Activated B cell treated with CpG ODN at 0.5 μM for 24 hours (primary cell): ENCODE measurements at regions of chr19 and their contacts with region 1.

Region 1: GRCh38 chr19:38769635-38770211 is 3.6 kb downstream of the LGALS7 start:
- DNase-seq: peak; percentile 94
- ATAC-seq: peak; percentile 89
- H3K4me3 Mint-ChIP-seq: peak overlapping the region; percentile 68
- H3K27ac Mint-ChIP-seq: peak overlapping the region; percentile 78
- H3K4me1 Mint-ChIP-seq: peaks cover 11% of the 10 kb centered on the region
- H3K27me3 Mint-ChIP-seq: no peaks in the 10 kb centered on the region
- CTCF ChIP-seq: peak; percentile 59

Region 2: GRCh38 chr19:38736413-38737280 is 33.1 kb before region 1 on chr19:
- CTCF ChIA-PET with region 1: no interaction called
- POLR2A ChIA-PET with region 1: interaction called, 28 read pairs
- intact Hi-C with region 1: loop called (anchors 2 kb)
- DNase-seq: peak; percentile 64
- ATAC-seq: peak; percentile 60
- H3K4me3 Mint-ChIP-seq: peak overlapping the region; percentile 71
- H3K27ac Mint-ChIP-seq: peak overlapping the region; percentile 12
- H3K4me1 Mint-ChIP-seq: peaks cover 38% of the 10 kb centered on the region
- H3K27me3 Mint-ChIP-seq: no peaks in the 10 kb centered on the region
- CTCF ChIP-seq: no peak

Region 3: DNA sequence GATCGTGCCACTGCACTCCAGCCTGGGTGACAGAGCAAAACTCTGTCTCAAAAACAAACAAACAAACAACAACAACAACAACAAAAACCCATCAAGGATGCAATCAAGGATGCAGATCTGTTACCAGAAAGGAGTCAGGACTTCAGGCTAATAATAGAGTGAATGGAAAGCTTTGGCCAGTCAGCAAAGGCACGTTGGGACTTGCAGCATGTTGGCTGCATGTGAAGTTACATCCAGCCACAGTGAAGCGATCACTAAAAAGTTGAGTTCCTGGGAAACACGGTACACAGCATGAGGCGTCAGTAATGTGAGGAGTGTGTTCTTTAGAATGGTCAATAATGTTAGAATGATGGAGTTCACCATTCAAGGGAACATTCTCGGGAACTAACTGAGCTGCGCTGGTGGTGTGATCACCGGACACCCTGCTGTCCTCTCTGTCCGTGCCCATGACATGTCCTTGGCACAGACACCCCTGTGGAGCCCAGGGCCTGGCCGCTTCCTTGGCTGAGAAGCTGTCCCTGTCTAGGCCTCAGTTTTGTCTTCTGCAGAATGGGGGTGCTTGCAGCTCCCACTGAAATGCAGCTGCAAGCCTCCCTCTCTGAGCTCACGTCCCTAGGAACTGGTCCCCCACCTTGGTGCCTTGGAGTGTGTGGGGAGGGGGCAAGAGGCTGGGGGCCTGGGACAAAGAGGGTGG is 17.0 kb after region 1 on chr19:
- CTCF ChIA-PET with region 1: interaction called, 3 read pairs
- POLR2A ChIA-PET with region 1: interaction called, 14 read pairs
- intact Hi-C with region 1: no loop called
- DNase-seq: no peak
- ATAC-seq: no peak
- H3K4me3 Mint-ChIP-seq: no peak overlapping the region
- H3K27ac Mint-ChIP-seq: no peak overlapping the region
- H3K4me1 Mint-ChIP-seq: no peaks in the 10 kb centered on the region
- H3K27me3 Mint-ChIP-seq: peaks cover under 1% of the 10 kb centered on the region
- CTCF ChIP-seq: no peak

Region 4: DNA sequence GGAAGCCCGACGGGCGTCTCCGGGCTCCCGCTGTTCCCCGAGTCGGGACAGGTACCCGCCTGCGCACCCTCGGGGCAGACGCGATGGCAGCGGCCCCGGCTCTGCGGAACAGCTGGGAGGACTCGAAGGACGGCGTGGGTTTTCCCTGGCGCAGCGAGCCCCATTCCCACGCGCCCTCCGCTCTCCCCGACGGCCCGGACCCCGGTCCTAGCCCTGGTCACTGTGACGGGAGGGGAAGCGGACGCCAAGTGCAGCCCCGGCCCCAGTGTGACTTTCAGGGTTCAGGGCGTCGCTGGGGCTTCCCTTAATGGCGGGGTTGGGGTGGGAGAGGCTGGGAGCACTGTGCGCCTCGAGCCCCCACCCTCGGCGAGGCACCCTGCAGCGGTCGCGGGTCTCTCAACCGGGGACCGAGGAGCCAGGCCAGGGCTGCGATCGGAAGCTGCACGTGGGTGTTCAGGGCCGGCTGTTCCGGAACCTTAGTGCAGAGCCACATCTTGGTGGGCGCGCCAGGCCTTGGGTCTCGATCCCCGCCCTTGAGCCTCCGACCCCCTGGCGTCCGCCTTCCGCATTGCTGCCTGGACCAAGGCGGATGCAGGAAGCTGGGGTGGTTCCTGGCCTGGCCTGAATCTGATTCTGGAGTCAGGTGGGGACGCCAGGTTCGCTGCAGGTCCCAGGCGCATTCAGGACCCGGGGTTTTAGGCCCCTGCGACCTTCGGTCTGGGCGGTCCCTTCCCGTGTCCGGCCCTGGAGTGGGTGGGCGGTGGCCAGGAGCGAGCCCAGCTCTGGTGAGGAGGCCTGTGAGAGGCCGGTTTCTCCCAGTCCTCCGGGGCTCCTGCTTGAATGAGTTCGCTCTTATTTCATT is 22.8 kb after region 1 on chr19:
- CTCF ChIA-PET with region 1: interaction called, 5 read pairs
- POLR2A ChIA-PET with region 1: interaction called, 14 read pairs
- intact Hi-C with region 1: no loop called
- DNase-seq: peak; percentile 63
- ATAC-seq: peak; percentile 76
- H3K4me3 Mint-ChIP-seq: peak overlapping the region; percentile 71
- H3K27ac Mint-ChIP-seq: no peak overlapping the region
- H3K4me1 Mint-ChIP-seq: peaks cover 6% of the 10 kb centered on the region
- H3K27me3 Mint-ChIP-seq: no peaks in the 10 kb centered on the region
- CTCF ChIP-seq: no peak

Region 5: DNA sequence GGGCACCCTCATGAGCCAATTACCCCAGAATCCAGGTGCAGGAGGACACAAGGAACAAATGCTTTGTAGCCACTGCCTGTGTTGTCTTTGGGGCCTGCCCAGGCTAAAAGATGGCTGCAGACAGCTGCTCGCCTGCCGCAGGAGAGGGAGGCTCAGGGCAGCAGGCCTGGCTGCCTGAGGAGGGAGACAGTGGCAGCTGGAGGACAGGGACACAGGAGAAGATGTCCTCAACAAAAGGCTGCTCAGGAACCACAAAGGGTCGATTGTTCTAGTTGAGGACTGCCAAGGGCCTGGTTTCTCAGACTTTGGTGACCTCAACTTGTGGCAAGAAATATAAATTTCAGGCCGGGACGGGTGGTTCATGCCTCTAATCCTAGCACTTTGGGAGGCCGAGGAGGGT is 122.0 kb after region 1 on chr19:
- CTCF ChIA-PET with region 1: interaction called, 11 read pairs
- POLR2A ChIA-PET with region 1: interaction called, 8 read pairs
- intact Hi-C with region 1: loop called (anchors 2 kb)
- DNase-seq: no peak
- ATAC-seq: no peak
- H3K4me3 Mint-ChIP-seq: no peak overlapping the region
- H3K27ac Mint-ChIP-seq: no peak overlapping the region
- H3K4me1 Mint-ChIP-seq: peaks cover 1% of the 10 kb centered on the region
- H3K27me3 Mint-ChIP-seq: no peaks in the 10 kb centered on the region
- CTCF ChIP-seq: no peak

Region 6: GRCh38 chr19:38899447-38900219 is 129.9 kb after region 1 on chr19 and contains the starts of genes NFKBIB and SIRT2:
- CTCF ChIA-PET with region 1: interaction called, 6 read pairs
- POLR2A ChIA-PET with region 1: interaction called, 14 read pairs
- intact Hi-C with region 1: no loop called
- DNase-seq: peak; percentile 91
- ATAC-seq: peak; percentile 91
- H3K4me3 Mint-ChIP-seq: peak within 1 kb of the TSS; percentile 91
- H3K27ac Mint-ChIP-seq: peak within 1 kb of the TSS; percentile 87
- H3K4me1 Mint-ChIP-seq: peaks cover 41% of the 10 kb centered on the region
- H3K27me3 Mint-ChIP-seq: no peaks in the 10 kb centered on the region
- CTCF ChIP-seq: no peak
- total RNA-seq, gene NFKBIB: 45.5 and 49.5 TPM in 2 replicates
- total RNA-seq, gene SIRT2: 28.4 and 32.7 TPM in 2 replicates